HCT116 (cell line): ENCODE measurements at regions of chr9 and their contacts with region 1.

Region 1: GRCh38 chr9:35111001-35111933 is 4.4 kb downstream of the ATOSB start:
- DNase-seq: peak; percentile 98
- ATAC-seq: peak; percentile 75
- H3K4me3 ChIP-seq: peak overlapping the region; percentile 74 to 84
- H3K27ac ChIP-seq: peak overlapping the region; percentile 54
- H3K4me1 ChIP-seq: peaks cover 31 to 60% of the 10 kb centered on the region in 2 experiments
- H3K27me3 ChIP-seq: no peaks in the 10 kb centered on the region
- CTCF ChIP-seq: no peak
- POLR2A ChIP-seq: no peak
- RAD21 ChIP-seq: no peak

Region 2: GRCh38 chr9:34603610-34604231 is 507.5 kb before region 1 on chr9:
- CTCF ChIA-PET with region 1: no interaction called
- POLR2A ChIA-PET with region 1: no interaction called
- RAD21 ChIA-PET with region 1: no interaction called
- intact Hi-C with region 1: no loop called
- DNase-seq: peak; percentile 42
- ATAC-seq: peak; percentile 98
- H3K4me3 ChIP-seq: no peak overlapping the region
- H3K27ac ChIP-seq: no peak overlapping the region
- H3K4me1 ChIP-seq: peaks cover 0 to 10% of the 10 kb centered on the region in 2 experiments; a peak in 1 of 4 replicates
- H3K27me3 ChIP-seq: no peaks in the 10 kb centered on the region
- CTCF ChIP-seq: peak; percentile 84 to 99 (median 91); a peak in 5 of 6 replicates
- POLR2A ChIP-seq: no peak
- RAD21 ChIP-seq: peak; percentile 94

Region 3: DNA sequence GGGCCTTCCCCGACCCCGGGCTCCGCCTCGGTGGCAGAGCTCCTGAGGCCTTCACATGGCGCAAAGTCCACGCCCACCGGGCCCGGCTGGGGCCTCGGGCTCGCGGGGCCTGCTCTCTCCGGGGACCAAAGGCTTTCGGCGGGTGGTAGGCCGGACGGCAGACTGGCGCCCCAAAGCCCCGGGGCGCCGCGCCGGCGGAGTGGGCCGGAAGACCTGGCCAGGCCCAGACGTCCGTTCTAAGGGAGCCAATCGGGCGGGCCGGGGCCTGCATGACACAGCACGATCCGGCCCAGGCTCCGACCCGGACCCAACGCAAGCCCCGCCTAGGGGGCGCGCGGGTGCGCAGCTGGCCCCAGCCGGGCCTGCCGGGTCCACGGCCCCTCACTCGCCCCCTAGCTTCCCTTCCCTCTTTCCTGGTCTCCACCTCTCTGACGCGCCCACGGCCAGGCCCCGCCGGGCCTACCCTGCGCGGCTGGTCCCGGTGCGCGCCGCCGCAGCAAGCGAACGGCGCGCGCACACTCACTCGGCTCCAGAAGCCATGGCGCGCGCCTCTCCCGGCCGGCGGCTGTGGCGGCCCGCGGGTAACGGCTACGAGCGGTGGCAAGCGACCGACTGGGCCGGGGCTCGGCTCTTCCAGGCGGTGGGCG is 39.3 kb before region 1 on chr9:
- CTCF ChIA-PET with region 1: interaction called, 3 read pairs
- POLR2A ChIA-PET with region 1: interaction called, 5 read pairs
- RAD21 ChIA-PET with region 1: no interaction called
- intact Hi-C with region 1: loop called (anchors 2 kb)
- DNase-seq: peak; percentile 62
- ATAC-seq: peak; percentile 75
- H3K4me3 ChIP-seq: peak overlapping the region; percentile 92 to 95
- H3K27ac ChIP-seq: peak overlapping the region; percentile 100
- H3K4me1 ChIP-seq: peaks cover 11 to 24% of the 10 kb centered on the region in 2 experiments
- H3K27me3 ChIP-seq: no peaks in the 10 kb centered on the region
- CTCF ChIP-seq: peak in 1 of 3 experiments; percentile 29; a peak in 1 of 6 replicates
- POLR2A ChIP-seq: no peak
- RAD21 ChIP-seq: no peak